GM13976 (cell line): ENCODE measurements at regions of chr18 and their contacts with region 1.

Region 1: DNA sequence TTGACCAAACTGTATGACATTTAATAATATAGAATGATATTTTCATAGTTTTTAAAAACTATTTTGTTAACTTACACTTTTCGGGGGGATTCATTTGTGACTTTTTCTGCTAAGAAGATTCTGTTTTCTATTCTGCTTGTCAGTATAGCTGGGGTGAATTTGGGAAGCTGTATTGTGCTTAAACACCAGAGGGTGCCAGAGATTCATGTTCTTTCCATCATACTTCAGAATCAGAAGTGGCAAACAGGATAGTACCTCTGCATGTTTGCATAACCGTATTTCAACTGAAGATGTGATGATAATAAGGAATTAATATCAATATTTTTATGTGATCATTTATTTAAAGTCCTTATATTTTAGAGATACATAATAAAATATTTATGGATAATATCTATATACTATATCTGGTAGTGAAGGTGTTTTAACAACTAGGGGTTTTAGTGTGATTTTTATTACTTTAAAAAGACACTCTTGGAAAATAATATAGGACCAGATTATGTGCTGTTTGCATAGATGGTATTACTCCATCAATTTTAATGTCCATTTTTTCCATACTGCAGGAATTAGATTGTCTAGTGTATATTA is 81.0 kb downstream of the TAF4B start:
- DNase-seq: peak; percentile 55
- CTCF ChIP-seq: peak; percentile 43

Region 2: DNA sequence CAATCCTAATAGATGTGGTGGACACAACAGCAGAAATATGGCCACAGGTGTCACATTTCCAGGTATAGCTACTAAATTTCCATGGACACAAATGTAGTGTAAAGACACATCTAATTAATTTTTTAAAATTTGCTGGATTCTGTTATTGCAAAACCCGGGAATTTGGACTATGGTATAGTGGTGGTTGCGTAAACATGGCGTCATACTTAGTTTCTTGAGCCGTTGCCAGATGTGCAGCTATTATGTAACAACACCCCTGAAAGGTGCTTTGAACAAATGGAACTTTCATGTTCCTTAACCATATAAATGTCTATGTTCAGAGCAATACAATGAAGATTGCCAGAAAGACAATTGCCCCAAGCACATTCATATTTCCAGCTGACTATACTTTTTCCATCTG is 1761.0 kb before region 1 on chr18:
- in situ Hi-C with region 1: no loop called
- DNase-seq: no peak
- CTCF ChIP-seq: no peak

Region 3: DNA sequence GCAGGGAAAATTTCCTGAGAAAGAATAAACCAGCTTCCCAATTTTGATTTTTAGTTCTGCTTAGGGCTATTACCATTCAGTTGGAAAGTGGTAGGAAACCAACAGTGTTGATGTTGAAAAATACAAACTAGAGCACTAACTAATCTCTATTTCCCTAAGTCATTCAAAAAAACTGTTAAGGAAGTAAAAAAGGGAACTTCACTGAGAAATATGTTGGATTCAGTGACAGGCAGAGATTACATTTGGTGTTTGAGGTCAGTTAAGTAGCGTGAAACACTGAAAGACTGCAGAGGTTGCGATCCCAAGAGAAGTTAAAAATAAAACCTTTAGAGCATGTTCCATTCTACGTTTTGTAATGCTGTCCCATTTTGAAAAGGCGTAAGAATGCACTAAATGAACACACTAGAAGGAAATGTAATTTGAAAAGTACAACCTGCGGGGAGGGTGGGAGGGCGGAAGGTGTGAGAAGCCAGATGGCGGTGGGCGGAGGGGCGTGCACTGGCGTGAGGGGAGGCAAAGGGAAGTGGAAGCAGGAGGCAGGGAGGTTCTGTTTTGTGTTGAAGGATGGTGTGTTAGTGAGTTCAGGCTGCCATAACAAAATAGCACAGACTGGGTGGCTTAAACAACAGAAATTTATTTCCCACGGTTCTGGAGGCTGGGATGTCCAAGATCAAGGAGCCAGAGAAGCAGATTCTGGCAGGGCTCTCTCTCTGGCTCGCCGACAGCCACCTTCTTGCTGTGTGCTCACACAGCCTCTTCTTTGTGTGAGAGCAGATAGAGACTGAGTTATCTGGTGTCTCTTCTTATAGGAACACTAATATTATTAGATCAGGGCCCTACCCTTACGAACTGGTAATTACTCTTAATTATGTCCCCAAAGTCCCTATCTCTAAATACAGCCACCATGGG is 335.4 kb after region 1 on chr18:
- in situ Hi-C with region 1: loop called (anchors 10 kb)
- DNase-seq: no peak
- CTCF ChIP-seq: no peak

Region 4: DNA sequence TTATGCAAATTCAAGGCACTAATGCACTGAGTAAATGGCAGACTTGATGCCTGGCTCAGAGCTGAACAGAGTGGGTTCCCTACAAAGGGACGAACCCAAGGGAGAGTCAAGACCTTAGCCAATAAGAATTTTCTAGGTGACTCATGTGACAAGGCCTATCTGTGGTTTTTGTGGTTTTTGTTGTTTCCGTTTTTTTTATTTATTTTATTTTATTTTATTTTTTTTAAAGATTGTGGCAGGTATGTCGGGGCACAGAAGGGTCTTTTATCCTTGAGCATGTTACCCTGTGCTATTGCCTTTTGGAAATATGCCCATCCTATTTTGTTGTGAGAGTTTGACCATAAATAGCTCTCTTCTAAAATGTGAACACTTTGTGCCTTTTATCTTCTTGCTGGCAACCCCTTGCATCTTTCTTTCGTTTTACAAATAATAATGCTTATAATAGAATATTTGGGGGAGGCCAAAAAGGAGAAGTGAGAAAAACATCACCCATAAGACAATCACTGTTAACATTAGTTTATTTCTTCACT is 671.6 kb after region 1 on chr18:
- in situ Hi-C with region 1: loop called (anchors 25 kb)
- DNase-seq: peak; percentile 57
- CTCF ChIP-seq: no peak